ENCODE measurements at regions of chr6 and their contacts with region 1.

Region 1: GRCh38 chr6:117555882-117556498 is 46.3 kb downstream of the GOPC start:
- DNase-seq: peak in 3 of 5 donors; percentile 22 to 61 (median 37)
- H3K4me3 ChIP-seq: no peak overlapping the region
- H3K27ac ChIP-seq: no peak overlapping the region
- H3K4me1 ChIP-seq: no peaks in the 10 kb centered on the region
- H3K27me3 ChIP-seq: no peaks in the 10 kb centered on the region
- CTCF ChIP-seq: peak; percentile 57 to 76 (median 70)
- EP300 ChIP-seq: no peak
- POLR2A ChIP-seq: no peak

Region 2: GRCh38 chr6:117449549-117450439 is 106.2 kb before region 1 on chr6:
- intact Hi-C with region 1: loop called (anchors 2 to 5 kb)
- DNase-seq: peak; percentile 31 to 65 (median 39)
- H3K4me3 ChIP-seq: no peak overlapping the region
- H3K27ac ChIP-seq: no peak overlapping the region
- H3K4me1 ChIP-seq: no peaks in the 10 kb centered on the region
- H3K27me3 ChIP-seq: no peaks in the 10 kb centered on the region
- CTCF ChIP-seq: peak; percentile 45 to 56 (median 47)
- EP300 ChIP-seq: no peak
- POLR2A ChIP-seq: no peak

Region 3: DNA sequence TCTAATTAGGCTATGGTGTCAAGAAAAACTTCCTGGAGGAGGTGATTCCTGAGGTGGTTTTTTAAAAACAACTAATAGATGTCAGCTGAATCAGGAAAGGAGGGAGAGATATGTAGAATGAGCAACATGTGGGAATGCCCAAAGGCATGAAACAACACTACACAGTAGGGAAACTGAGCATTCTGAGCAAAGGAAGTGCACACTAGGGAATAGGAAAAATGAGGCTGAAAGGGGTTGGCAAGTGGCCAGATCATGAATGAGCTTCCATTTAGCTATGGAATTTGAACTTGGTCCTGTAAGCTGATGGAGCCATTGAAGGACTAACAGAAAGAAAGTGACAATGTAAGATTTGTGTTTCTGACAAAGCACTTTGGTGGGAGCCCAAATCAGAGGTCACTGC is 334.2 kb after region 1 on chr6:
- intact Hi-C with region 1: no loop called
- DNase-seq: no peak
- H3K4me3 ChIP-seq: no peak overlapping the region
- H3K27ac ChIP-seq: no peak overlapping the region
- H3K4me1 ChIP-seq: no peaks in the 10 kb centered on the region
- H3K27me3 ChIP-seq: no peaks in the 10 kb centered on the region
- CTCF ChIP-seq: no peak
- EP300 ChIP-seq: no peak
- POLR2A ChIP-seq: no peak